ENCODE measurements at regions of chr2 and their contacts with region 1.

Region 1: DNA sequence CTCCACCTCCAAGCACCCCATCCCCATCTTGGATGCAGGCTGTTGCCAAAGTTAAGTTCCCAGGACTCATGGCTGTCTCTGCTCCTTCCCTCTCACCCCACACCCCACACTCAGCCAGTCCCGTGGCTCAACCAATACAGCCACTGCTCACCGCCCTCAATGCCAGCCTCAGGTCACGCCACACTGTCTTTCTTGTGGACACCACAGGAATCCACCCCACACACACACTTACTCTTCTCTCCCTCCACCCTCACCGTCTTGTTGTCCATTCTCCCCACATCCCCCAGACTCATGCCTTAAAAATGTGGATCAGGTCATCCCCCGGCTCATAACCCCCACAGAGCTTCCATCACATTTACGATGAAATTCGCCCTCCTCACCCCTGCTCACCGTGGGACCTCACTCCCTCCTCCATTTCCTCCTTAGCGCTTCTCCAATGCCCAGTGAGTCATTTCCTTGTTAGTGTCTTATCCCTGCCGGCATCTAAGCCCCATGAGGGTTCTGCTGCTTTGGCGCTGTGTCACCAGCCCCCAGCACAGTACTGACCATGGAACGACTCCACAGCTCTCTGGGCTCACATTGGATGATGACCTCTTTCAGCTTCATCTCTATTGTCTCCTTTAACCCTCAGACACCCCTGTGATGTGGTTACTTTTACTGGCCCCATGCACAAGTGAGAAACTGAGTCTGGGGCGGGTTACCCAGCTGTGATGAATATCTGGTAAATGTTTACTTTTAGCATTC is 13.8 kb downstream of the MLPH start:
- DNase-seq: no peak
- H3K4me3 Mint-ChIP-seq: no peak overlapping the region
- H3K27ac Mint-ChIP-seq: no peak overlapping the region
- H3K4me1 Mint-ChIP-seq: peaks cover 2% of the 10 kb centered on the region
- H3K27me3 Mint-ChIP-seq: peaks cover 15% of the 10 kb centered on the region

Region 2: DNA sequence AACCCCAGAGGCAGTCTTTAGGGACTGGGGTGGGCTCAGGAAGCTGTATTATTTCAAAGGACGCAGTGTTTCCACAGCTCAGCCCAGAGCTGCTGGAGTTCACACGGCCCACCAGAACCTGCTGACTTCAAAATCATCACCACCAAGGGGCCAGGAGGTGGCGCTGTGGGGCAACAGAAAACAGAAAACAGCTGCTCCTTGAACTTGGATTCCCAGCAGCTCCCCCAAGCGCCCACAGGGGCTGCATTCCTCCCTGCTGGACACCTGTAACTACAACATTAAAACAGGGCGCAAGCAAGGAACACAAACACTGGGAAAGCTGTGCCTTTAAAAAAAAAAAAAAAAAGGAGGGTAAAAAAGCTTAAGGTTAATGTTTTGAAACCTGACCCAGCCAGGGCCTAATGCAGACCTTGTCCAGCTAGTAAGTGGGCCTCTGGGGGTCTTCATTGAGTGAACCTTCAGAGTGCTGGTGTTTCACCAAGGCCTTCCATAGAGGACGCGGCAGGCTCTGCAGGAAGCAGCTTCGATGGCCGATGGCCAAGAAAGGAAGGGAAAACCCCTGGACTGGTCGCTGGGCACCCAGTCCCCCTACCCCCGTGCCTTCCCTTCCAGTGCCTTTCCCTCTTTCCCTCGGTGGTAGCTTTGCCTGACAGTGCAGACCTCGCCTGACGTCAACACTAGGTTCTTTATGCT is 12.1 kb after region 1 on chr2:
- CTCF ChIA-PET with region 1: interaction called, 12 read pairs
- POLR2A ChIA-PET with region 1: no interaction called
- DNase-seq: peak; percentile 78
- H3K4me3 Mint-ChIP-seq: no peak overlapping the region
- H3K27ac Mint-ChIP-seq: no peak overlapping the region
- H3K4me1 Mint-ChIP-seq: no peaks in the 10 kb centered on the region
- H3K27me3 Mint-ChIP-seq: peaks cover 5% of the 10 kb centered on the region

Region 3: DNA sequence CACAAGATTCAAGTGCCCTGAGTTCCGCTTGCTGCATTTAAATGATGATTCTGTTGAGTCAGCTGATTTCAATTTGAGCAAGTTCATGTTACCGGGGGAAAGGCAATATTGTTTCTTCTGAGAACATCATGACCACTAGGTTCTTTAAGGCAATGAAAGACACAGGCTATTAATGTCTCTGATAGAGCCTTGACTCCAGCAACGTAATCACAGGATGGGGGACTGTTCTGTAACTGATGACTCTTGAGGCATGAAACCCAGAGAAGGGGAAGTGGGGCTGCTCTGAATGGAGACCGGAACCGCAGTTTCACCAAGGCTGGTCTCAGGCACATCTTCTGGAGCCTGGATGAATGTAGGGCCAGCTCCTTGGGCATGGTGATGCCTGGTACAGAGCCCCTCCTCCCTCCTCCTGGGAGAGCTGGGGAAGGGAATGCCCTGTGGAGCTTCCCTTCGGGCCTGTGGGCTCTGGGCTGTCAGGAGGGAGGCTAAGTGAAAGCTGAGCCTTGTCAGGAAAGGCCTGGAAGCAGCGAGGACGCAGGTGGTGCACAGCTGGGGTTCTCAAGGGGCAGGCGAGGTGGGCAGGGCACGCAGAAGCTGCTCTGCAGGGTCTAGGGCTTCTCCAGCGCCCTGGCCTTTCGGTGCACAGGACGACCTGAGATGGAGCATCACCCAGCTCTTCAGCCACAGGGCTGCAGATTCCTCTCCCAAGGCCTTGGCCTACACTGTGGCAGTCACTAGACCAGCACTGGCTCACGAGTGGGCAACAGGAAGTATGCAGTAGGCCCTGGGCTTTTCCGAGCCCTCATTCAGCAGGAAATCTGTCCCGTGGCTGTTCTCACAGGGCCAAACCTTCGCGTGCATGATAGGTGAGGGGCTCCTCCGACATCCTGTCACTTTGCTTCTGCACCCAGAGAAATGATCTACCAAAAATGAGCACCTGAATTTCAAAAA is 28.9 kb after region 1 on chr2:
- CTCF ChIA-PET with region 1: no interaction called
- POLR2A ChIA-PET with region 1: no interaction called
- DNase-seq: no peak
- H3K4me3 Mint-ChIP-seq: no peak overlapping the region
- H3K27ac Mint-ChIP-seq: no peak overlapping the region
- H3K4me1 Mint-ChIP-seq: no peaks in the 10 kb centered on the region
- H3K27me3 Mint-ChIP-seq: no peaks in the 10 kb centered on the region

Measured in activated CD4-positive, alpha-beta T cell treated with anti-CD3 and anti-CD28 coated beads, Interleukin-2, amount 10 ng/mL, durations not matched to agents 7 days and 5 days (primary cell).